Activated CD4-positive, alpha-beta memory T cell treated with anti-CD3 and anti-CD28 coated beads for 36 hours (primary cell): ENCODE measurements at regions of chr2 and their contacts with region 1.

Region 1: GRCh38 chr2:98012561-98012991 is 16.8 kb upstream of the TMEM131 start:
- DNase-seq: peak; percentile 83
- H3K4me3 Mint-ChIP-seq: no peak overlapping the region
- H3K27ac Mint-ChIP-seq: peak overlapping the region; percentile 63
- H3K4me1 Mint-ChIP-seq: peaks cover 35% of the 10 kb centered on the region
- H3K27me3 Mint-ChIP-seq: peaks cover 5% of the 10 kb centered on the region

Region 2: DNA sequence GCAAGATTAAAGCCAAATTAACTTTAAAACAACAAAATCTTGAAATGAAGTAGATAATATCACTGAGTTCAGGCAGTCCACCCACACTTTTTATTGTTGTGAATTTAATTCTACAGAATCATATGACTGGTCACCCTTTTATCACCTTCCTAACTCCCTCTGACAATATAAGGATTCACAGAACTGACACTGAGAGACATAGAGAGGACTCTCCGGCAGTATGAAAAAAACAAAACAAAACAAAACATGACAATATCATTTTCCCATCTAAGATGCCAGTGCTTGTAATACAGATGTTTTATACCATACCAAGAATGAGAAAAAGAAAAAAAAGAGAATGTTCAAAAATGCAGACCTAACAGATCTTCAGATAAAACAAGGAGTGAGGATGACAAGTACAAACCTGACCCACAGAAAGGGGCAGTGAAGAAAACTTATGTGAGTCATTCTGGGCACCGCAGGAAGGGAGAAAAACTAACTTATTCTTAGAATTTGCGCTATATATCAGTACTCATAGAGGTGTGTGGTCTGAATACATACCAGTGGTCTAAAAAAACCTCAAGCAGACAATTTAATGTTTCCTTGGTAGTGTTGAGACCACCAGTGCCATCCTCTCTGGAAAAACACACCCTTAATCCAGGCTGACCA is 162.6 kb before region 1 on chr2:
- CTCF ChIA-PET with region 1: no interaction called
- POLR2A ChIA-PET with region 1: interaction called, 3 read pairs
- intact Hi-C with region 1: loop called (anchors 5 kb)
- DNase-seq: peak; percentile 32
- H3K4me3 Mint-ChIP-seq: no peak overlapping the region
- H3K27ac Mint-ChIP-seq: peak overlapping the region; percentile 16
- H3K4me1 Mint-ChIP-seq: peaks cover 49% of the 10 kb centered on the region
- H3K27me3 Mint-ChIP-seq: no peaks in the 10 kb centered on the region

Region 3: DNA sequence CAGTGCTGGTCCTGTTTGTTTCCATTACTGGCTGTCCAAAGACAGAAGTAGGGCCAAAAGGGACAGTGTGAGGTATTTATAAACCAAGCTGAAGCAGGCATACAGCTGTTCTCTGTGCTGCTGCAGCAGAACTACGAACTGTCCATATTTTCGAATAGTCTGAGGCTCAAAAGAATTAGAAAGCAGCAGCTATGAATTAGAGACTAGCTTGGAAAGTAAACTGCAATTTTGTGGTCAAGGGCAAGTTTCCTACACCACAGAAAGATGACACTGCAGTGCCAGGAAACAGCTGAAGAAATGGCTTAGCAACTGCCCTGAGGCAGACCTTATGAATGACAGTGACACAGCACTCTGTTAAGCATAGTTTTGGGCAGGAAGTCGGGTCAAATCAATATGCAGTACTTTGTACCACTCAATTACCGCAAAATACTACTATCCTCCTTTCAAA is 142.2 kb before region 1 on chr2:
- CTCF ChIA-PET with region 1: no interaction called
- POLR2A ChIA-PET with region 1: no interaction called
- intact Hi-C with region 1: loop called (anchors 1 kb)
- DNase-seq: peak; percentile 74
- H3K4me3 Mint-ChIP-seq: no peak overlapping the region
- H3K27ac Mint-ChIP-seq: peak overlapping the region; percentile 5
- H3K4me1 Mint-ChIP-seq: peaks cover 41% of the 10 kb centered on the region
- H3K27me3 Mint-ChIP-seq: no peaks in the 10 kb centered on the region

Region 4: GRCh38 chr2:97966518-97967215 is 45.9 kb before region 1 on chr2:
- CTCF ChIA-PET with region 1: no interaction called
- POLR2A ChIA-PET with region 1: interaction called, 4 read pairs
- intact Hi-C with region 1: loop called (anchors 1 kb)
- DNase-seq: no peak
- H3K4me3 Mint-ChIP-seq: no peak overlapping the region
- H3K27ac Mint-ChIP-seq: no peak overlapping the region
- H3K4me1 Mint-ChIP-seq: peaks cover 72% of the 10 kb centered on the region
- H3K27me3 Mint-ChIP-seq: no peaks in the 10 kb centered on the region

Region 5: DNA sequence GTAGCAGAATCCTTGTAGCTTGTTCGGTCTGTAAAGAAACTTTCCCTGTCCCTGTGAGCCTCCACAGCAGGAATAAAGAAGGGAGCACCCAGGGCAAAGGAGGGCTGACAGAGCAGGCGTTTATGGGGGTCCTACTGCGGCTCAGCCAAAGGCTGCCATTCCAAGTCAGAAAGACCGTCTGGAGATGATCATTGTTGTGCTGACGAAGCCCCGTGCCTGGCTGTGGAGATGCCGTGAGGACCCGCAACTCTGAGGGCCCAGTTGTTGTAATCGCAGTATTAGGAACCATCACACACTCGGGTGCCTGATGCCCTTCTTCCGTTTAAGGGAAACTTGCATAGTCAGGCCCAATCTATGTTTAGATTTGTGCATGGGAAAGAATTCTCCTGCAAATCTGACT is 57.5 kb after region 1 on chr2:
- CTCF ChIA-PET with region 1: no interaction called
- POLR2A ChIA-PET with region 1: no interaction called
- intact Hi-C with region 1: no loop called
- DNase-seq: no peak
- H3K4me3 Mint-ChIP-seq: no peak overlapping the region
- H3K27ac Mint-ChIP-seq: no peak overlapping the region
- H3K4me1 Mint-ChIP-seq: no peaks in the 10 kb centered on the region
- H3K27me3 Mint-ChIP-seq: peaks cover 14% of the 10 kb centered on the region

Region 6: GRCh38 chr2:98134172-98135005 is 121.8 kb after region 1 on chr2:
- CTCF ChIA-PET with region 1: no interaction called
- POLR2A ChIA-PET with region 1: interaction called, 6 read pairs
- intact Hi-C with region 1: loop called (anchors 2 kb)
- DNase-seq: peak; percentile 85
- H3K4me3 Mint-ChIP-seq: peak overlapping the region; percentile 9
- H3K27ac Mint-ChIP-seq: peak overlapping the region; percentile 65
- H3K4me1 Mint-ChIP-seq: peaks cover 30% of the 10 kb centered on the region
- H3K27me3 Mint-ChIP-seq: peaks cover 9% of the 10 kb centered on the region

Region 7: DNA sequence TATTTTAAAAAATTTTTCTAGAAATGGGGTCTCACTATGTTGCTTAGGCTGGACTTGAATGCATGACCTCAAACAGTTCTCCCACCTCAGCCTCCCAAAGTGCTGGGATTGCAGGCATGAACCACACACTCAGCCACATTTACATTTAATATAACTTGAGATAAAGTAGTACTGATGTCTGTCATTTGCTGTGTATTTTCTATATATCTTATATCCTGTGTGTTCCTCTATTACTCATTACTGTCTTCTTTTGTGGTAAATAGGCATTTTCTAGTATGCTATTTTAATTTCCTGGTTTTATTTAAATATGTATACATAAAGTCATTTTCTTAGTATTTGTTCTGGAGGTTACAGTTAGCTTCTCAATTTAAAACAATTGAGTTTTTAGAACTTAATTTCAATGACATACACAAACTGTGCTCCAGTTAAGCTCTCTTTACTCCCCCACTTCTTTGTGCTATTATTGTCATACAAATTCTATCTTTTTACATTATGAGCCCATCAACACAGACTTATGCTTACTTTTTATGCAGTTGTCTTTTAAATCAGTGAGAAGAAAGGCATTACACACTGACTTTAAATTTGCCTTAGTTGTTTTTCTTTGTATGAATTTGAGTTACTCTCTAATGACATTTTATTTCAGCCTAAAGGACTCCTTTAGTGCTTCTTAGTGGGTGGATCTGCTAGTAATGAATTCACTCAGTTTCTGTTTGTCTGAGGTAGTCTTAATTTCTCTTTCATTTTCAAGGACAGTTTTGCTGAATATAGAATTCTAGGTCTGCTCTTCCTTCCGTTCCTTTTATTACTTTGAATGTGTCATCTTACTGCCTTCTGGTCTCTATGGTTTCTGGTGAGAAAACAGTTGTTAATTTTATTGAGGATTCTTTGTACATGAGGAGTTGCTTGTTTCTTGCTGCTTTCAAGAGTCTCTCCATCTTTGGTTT is 425.9 kb after region 1 on chr2:
- CTCF ChIA-PET with region 1: no interaction called
- POLR2A ChIA-PET with region 1: no interaction called
- intact Hi-C with region 1: loop called (anchors 5 kb)
- DNase-seq: no peak
- H3K4me3 Mint-ChIP-seq: peak overlapping the region; percentile 8
- H3K27ac Mint-ChIP-seq: peak overlapping the region; percentile 73
- H3K4me1 Mint-ChIP-seq: peaks cover 27% of the 10 kb centered on the region
- H3K27me3 Mint-ChIP-seq: no peaks in the 10 kb centered on the region